T-cell (primary cell): ENCODE measurements at regions of chr17 and their contacts with region 1.

Region 1: GRCh38 chr17:67569873-67570272 is 147.9 kb upstream of the NOL11 start:
- DNase-seq: peak in 1 of 35 experiments; percentile 5
- ATAC-seq: no peak
- H3K4me3 ChIP-seq: no peak overlapping the region
- H3K4me3 Mint-ChIP-seq: no peak overlapping the region
- H3K27ac ChIP-seq: no peak overlapping the region
- H3K27ac Mint-ChIP-seq: peak overlapping the region in 1 of 2 donors; percentile 28
- H3K4me1 ChIP-seq: no peaks in the 10 kb centered on the region
- H3K4me1 Mint-ChIP-seq: peaks cover 33 to 36% (median 34%) of the 10 kb centered on the region in 3 donors
- H3K27me3 ChIP-seq: no peaks in the 10 kb centered on the region
- H3K27me3 Mint-ChIP-seq: no peaks in the 10 kb centered on the region

Region 2: GRCh38 chr17:67496286-67496685 is 73.6 kb before region 1 on chr17:
- CTCF ChIA-PET with region 1: interaction called in 1 of 2 experiments, 10 read pairs
- POLR2A ChIA-PET with region 1: no interaction called
- DNase-seq: no peak
- ATAC-seq: no peak
- H3K4me3 ChIP-seq: no peak overlapping the region
- H3K4me3 Mint-ChIP-seq: no peak overlapping the region
- H3K27ac ChIP-seq: no peak overlapping the region
- H3K27ac Mint-ChIP-seq: no peak overlapping the region
- H3K4me1 ChIP-seq: peaks cover under 1 to 34% of the 10 kb centered on the region in 2 experiments
- H3K4me1 Mint-ChIP-seq: peaks cover 63 to 67% (median 67%) of the 10 kb centered on the region in 3 donors
- H3K27me3 ChIP-seq: no peaks in the 10 kb centered on the region
- H3K27me3 Mint-ChIP-seq: no peaks in the 10 kb centered on the region

Region 3: DNA sequence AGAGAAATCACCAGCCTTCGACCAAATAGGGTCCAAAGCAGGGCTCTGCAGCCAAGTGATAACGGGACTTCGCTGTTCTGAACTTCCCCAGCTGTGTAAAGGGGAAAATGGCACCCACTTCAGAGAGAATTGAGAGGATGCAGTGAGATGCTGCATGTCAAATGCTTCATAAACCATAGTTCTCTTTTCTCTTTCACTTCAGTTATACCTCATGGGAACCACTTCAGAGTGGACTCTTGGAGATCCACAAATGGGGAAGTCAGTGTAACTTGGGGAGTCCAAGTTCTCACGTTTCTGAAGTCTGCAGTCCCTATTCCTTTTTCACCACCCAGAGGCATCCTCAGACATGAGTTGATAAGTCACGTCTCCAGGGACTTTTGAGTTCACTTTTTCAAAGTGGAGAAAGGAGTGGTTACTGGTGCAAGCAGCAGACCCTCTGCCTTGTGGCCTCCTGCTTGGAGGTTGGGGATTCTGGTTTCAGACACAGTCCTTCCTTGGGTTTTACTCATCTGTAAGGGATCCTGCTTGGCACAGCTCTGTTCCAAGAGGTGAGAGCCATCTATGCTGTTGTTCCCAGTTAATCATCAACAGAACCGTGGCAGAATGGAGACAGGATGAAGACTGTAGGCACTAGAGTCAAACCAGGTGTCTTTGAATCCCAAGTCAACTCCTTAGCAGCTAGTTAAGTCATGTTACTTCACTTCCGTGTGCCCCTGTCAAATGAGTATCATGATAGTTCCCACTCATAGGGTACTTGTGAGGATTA is 24.4 kb after region 1 on chr17:
- CTCF ChIA-PET with region 1: no interaction called
- POLR2A ChIA-PET with region 1: no interaction called
- DNase-seq: no peak
- ATAC-seq: no peak
- H3K4me3 ChIP-seq: no peak overlapping the region
- H3K4me3 Mint-ChIP-seq: no peak overlapping the region
- H3K27ac ChIP-seq: no peak overlapping the region
- H3K27ac Mint-ChIP-seq: no peak overlapping the region
- H3K4me1 ChIP-seq: no peaks in the 10 kb centered on the region
- H3K4me1 Mint-ChIP-seq: peaks cover 21 to 25% (median 22%) of the 10 kb centered on the region in 3 donors
- H3K27me3 ChIP-seq: no peaks in the 10 kb centered on the region
- H3K27me3 Mint-ChIP-seq: no peaks in the 10 kb centered on the region